ENCODE measurements at regions of chr2 and their contacts with region 1.

Region 1: GRCh38 chr2:190088917-190089316 is 26.4 kb upstream of the MSTN start:
- DNase-seq: peak in 1 of 2 donors; percentile 73
- ATAC-seq: peak in 2 of 3 donors; percentile 36 to 71
- H3K4me3 ChIP-seq: no peak overlapping the region
- H3K4me3 Mint-ChIP-seq: no peak overlapping the region
- H3K27ac ChIP-seq: no peak overlapping the region
- H3K27ac Mint-ChIP-seq: no peak overlapping the region
- H3K4me1 ChIP-seq: no peaks in the 10 kb centered on the region
- H3K4me1 Mint-ChIP-seq: no peaks in the 10 kb centered on the region
- H3K27me3 ChIP-seq: no peaks in the 10 kb centered on the region
- H3K27me3 Mint-ChIP-seq: no peaks in the 10 kb centered on the region
- CTCF ChIP-seq: peak; percentile 56

Region 2: DNA sequence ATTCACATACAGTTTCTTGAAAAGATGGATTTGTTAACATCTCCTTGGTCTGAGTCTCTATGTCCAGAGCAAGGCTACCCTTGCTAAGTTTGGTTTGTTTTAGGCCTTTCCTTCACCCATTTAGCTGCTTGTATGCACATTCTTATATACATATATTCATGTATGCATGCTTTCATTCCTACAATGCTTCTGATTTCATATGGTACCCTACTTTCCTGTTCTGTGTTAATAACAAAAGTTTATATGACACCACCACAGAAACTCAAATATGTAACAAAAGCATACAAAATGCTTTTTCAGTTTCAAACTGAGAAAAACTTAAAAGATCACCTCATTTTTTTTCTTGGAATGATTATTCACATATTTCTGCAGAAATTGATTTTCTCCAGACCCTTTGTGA is 365.7 kb before region 1 on chr2:
- intact Hi-C with region 1: no loop called
- DNase-seq: no peak
- ATAC-seq: no peak
- H3K4me3 ChIP-seq: no peak overlapping the region
- H3K4me3 Mint-ChIP-seq: no peak overlapping the region
- H3K27ac ChIP-seq: no peak overlapping the region
- H3K27ac Mint-ChIP-seq: no peak overlapping the region
- H3K4me1 ChIP-seq: no peaks in the 10 kb centered on the region
- H3K4me1 Mint-ChIP-seq: no peaks in the 10 kb centered on the region
- H3K27me3 ChIP-seq: no peaks in the 10 kb centered on the region
- H3K27me3 Mint-ChIP-seq: no peaks in the 10 kb centered on the region
- CTCF ChIP-seq: no peak

Region 3: GRCh38 chr2:190277234-190278112 is 188.6 kb after region 1 on chr2:
- intact Hi-C with region 1: loop called (anchors 1 kb)
- DNase-seq: peak in 1 of 2 donors; percentile 52
- ATAC-seq: peak in 1 of 3 donors; percentile 28
- H3K4me3 ChIP-seq: no peak overlapping the region
- H3K4me3 Mint-ChIP-seq: no peak overlapping the region
- H3K27ac ChIP-seq: no peak overlapping the region
- H3K27ac Mint-ChIP-seq: no peak overlapping the region
- H3K4me1 ChIP-seq: no peaks in the 10 kb centered on the region
- H3K4me1 Mint-ChIP-seq: peaks cover 2% of the 10 kb centered on the region in 2 donors
- H3K27me3 ChIP-seq: no peaks in the 10 kb centered on the region
- H3K27me3 Mint-ChIP-seq: no peaks in the 10 kb centered on the region
- CTCF ChIP-seq: peak; percentile 45

Region 4: GRCh38 chr2:190376591-190377245 is 287.8 kb after region 1 on chr2:
- intact Hi-C with region 1: loop called (anchors 1 kb)
- DNase-seq: no peak
- ATAC-seq: no peak
- H3K4me3 ChIP-seq: no peak overlapping the region
- H3K4me3 Mint-ChIP-seq: no peak overlapping the region
- H3K27ac ChIP-seq: no peak overlapping the region
- H3K27ac Mint-ChIP-seq: no peak overlapping the region
- H3K4me1 ChIP-seq: no peaks in the 10 kb centered on the region
- H3K4me1 Mint-ChIP-seq: peaks cover 0 to 3% of the 10 kb centered on the region in 2 donors
- H3K27me3 ChIP-seq: no peaks in the 10 kb centered on the region
- H3K27me3 Mint-ChIP-seq: no peaks in the 10 kb centered on the region
- CTCF ChIP-seq: no peak

Region 5: GRCh38 chr2:190804182-190804795 is 715.4 kb after region 1 on chr2:
- intact Hi-C with region 1: loop called (anchors 10 kb)
- DNase-seq: peak in 1 of 2 donors; percentile 47
- ATAC-seq: no peak
- H3K4me3 ChIP-seq: no peak overlapping the region
- H3K4me3 Mint-ChIP-seq: no peak overlapping the region
- H3K27ac ChIP-seq: no peak overlapping the region
- H3K27ac Mint-ChIP-seq: no peak overlapping the region
- H3K4me1 ChIP-seq: no peaks in the 10 kb centered on the region
- H3K4me1 Mint-ChIP-seq: no peaks in the 10 kb centered on the region
- H3K27me3 ChIP-seq: no peaks in the 10 kb centered on the region
- H3K27me3 Mint-ChIP-seq: no peaks in the 10 kb centered on the region
- CTCF ChIP-seq: peak; percentile 41